ENCODE measurements at regions of chr15 and their contacts with region 1.

Region 1: DNA sequence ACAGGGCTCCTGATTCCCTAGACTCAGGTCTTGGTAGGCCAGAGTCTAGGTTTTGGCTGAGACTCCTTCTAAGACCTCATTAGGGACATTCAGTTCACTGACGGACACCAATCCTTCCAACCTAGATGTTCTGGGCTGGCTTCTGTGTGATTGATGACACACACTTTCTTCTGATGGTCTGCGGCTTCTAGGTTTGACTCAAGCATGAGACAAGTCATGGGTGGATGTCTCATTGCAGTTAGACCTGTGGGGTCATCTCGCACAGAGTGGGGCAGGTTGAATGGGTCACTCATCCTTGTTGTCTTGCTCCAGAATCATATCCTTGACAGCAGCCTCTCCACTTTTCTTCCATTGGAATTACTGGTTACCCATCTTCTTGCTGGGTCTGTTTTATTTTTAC is 35.8 kb downstream of the ARNT2 start:
- DNase-seq: no peak
- ATAC-seq: no peak
- H3K4me3 ChIP-seq: no peak overlapping the region
- H3K4me3 Mint-ChIP-seq: no peak overlapping the region
- H3K27ac ChIP-seq: no peak overlapping the region
- H3K27ac Mint-ChIP-seq: no peak overlapping the region
- H3K4me1 ChIP-seq: no peaks in the 10 kb centered on the region
- H3K4me1 Mint-ChIP-seq: no peaks in the 10 kb centered on the region
- H3K27me3 ChIP-seq: peaks cover 0 to 9% of the 10 kb centered on the region in 2 experiments
- H3K27me3 Mint-ChIP-seq: peaks cover 19% of the 10 kb centered on the region
- CTCF ChIP-seq: no peak

Region 2: DNA sequence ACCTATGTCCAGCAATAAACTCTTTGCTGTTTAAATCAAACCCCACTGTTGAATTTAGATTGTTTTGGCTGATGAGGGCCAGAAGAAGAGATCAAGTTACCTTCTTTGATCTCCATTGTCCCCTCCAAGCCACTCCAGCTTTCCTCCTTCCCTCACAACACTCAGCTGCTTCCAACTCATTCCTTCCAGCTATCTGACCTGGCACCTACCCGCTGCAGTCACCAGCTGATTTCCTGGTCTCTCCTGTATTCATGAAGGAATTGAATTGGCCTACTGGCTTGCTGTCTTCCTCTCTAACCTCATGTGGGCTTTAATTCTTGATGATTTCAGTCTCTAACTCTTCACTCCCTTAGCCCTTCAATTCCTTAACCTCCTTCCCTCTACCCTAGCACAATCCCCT is 214.3 kb after region 1 on chr15:
- CTCF ChIA-PET with region 1: no interaction called
- POLR2A ChIA-PET with region 1: no interaction called
- intact Hi-C with region 1: loop called in 1 of 2 experiments (anchors 5 kb)
- DNase-seq: no peak
- ATAC-seq: no peak
- H3K4me3 ChIP-seq: no peak overlapping the region
- H3K4me3 Mint-ChIP-seq: no peak overlapping the region
- H3K27ac ChIP-seq: no peak overlapping the region
- H3K27ac Mint-ChIP-seq: no peak overlapping the region
- H3K4me1 ChIP-seq: no peaks in the 10 kb centered on the region
- H3K4me1 Mint-ChIP-seq: no peaks in the 10 kb centered on the region
- H3K27me3 ChIP-seq: no peaks in the 10 kb centered on the region
- H3K27me3 Mint-ChIP-seq: peaks cover 12% of the 10 kb centered on the region
- CTCF ChIP-seq: no peak

Measured in CD8-positive, alpha-beta T cell (primary cell).